ENCODE measurements at regions of chr20 and their contacts with region 1.

Region 1: DNA sequence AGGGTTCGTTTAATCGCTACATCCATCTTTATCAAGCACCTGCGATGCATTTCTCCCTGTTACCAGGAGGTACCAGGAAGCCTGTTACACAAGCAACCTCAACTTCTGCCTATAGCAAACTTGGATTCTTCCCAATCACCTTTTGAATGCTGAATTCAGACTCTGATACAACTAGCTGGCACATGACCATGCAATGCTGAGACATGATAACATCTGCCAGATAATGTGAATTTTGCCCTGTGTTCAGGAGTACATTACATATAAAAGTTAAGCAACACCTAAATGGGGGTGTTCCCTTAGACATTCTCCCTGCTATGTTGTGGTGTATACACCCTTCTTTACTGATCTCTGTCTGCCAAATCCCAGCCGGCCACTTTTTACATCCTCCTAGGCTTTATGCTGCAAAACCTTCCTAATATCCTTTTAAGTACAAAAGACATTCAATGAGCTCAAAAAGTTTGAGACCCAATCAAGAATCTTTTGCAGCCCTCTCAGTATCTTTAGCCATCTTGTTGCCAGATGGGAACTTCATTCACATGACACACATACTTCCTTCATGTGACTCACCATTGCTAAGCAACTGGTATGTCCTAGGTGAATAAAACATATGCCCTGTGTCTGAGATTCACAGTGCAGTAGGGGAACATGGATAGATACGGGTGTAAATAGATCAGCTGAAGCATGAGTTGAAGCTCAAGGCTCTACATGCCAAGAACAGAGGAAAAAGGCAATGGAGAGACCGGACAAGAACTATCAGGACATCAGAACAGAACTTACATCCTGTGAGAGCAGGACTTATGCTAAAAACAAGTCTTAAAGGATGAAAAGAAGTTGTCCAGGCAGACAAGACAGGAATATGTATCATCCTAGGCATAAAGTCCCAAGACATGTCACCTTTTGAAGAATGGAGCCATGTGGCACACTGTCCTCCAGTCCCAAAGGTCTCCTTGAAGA is 84.3 kb downstream of the ZHX3 start:
- DNase-seq: no peak
- H3K4me3 ChIP-seq: no peak overlapping the region
- H3K4me3 Mint-ChIP-seq: peak overlapping the region; percentile 39
- H3K27ac Mint-ChIP-seq: peak overlapping the region; percentile 10
- H3K4me1 ChIP-seq: peaks cover 9% of the 10 kb centered on the region
- H3K4me1 Mint-ChIP-seq: peaks cover 9% of the 10 kb centered on the region
- H3K27me3 ChIP-seq: no peaks in the 10 kb centered on the region; the same call in 1 of the 2 replicates
- H3K27me3 Mint-ChIP-seq: no peaks in the 10 kb centered on the region
- CTCF ChIP-seq: no peak

Region 2: DNA sequence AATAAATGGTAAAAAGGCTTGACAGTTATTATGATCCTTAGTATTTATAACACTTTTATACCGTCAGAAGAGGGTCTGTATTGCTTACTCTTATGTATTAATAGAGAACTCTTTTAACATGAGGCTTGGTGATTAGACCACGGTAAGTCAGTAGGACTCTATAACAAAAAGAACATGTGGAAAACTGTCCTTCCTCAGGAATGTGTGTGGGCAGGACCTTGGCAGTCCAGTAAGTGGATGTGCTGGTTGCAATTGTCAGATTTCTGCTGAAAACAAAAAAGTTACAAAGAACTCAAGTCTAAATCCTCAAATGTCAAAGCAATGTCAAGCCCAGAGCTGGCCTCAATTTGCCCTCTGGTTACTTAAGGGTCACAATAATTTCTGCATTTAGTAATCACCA is 14.8 kb before region 1 on chr20:
- CTCF ChIA-PET with region 1: interaction called, 16 read pairs
- POLR2A ChIA-PET with region 1: no interaction called
- intact Hi-C with region 1: no loop called
- DNase-seq: no peak
- H3K4me3 ChIP-seq: no peak overlapping the region
- H3K4me3 Mint-ChIP-seq: no peak overlapping the region
- H3K27ac Mint-ChIP-seq: no peak overlapping the region
- H3K4me1 ChIP-seq: no peaks in the 10 kb centered on the region
- H3K4me1 Mint-ChIP-seq: no peaks in the 10 kb centered on the region
- H3K27me3 ChIP-seq: no peaks in the 10 kb centered on the region
- H3K27me3 Mint-ChIP-seq: no peaks in the 10 kb centered on the region
- CTCF ChIP-seq: no peak